Posterior vena cava (tissue), 2 donors: ENCODE measurements at regions of chr22 and their contacts with region 1.

Region 1: GRCh38 chr22:44947049-44947448 is 62.8 kb downstream of the PHF21B start:
- DNase-seq: no peak

Region 2: DNA sequence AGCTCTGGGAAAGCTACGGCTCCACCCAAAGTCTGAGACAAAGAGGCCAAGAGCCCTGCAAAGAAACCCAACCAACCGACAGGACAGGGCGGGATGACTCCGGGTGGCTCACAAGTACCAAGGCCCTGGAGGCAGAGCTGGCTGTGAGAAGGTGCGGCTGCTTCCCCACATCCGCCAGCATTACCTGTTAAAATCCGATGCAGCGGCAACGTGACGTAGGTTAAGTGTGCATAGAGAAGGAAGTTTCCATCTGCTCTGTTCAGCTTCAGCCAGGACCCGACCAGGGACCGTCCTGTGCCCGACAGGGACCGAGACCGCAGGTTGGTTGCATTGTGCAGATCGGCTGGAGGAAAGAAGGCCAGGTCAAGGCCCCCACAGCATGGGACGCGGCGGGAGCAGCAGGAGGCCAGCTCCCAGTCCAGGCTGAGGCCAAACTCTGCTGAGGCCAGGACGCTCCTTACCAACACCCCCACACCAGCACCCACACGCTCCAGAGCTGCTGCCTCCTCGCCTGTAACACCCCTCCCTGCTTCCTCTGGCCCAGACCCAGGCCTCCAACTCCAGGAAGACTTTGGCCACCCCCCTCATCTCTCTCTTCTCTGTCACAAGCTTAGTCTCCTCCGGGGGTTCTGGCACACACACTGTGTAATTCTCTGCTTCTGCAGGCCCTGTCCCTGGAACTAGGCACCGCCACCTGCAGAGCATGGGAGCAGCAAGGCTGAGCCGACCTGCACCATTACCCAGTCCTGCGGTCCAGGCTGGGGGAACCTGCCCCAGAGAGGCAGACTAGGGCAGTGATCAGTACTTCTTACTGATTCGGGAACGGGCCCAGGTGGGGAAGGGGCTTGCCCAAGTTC is 250.8 kb after region 1 on chr22:
- intact Hi-C with region 1: loop called in 1 of 2 experiments (anchors 5 kb)
- DNase-seq: peak; percentile 66